IMR-90 (cell line): ENCODE measurements at regions of chr1 and their contacts with region 1.

Region 1: DNA sequence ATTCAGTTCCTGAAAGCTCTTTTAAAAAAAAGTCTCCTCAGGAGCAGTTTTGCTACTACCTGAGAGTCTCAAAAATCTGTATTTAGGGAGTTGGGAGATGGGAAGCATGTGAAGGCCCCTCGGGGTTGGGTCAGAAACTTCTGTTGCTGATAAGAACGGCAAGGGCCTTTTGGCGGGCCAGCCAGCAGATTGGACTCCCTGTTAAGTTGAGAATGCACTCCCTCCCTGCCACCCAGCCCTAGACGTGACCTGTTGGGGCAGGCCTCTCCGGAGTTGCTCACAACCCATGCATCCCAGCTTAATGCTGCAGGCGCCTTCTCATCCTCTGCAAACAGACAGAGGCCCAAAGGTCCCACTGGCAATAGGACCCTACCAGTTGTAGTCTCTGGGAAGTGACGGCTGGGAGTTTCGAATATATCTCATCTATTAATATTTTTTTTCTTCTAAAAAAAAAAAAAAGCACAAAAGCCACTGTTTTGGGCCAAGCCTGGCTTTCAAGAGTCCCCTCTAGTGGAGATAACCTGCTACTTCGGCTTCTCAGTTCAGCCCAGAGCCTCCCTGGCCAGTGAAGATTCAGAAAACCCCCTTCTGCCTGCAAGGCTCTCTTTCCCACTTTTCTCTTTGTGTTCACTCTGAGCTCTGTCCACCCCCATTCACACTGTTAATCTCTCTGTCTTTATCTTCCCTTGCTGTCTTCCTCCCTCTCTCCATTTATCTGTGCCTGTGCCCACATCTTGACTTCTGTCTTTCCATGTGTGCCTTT is 5.3 kb downstream of the PLXNA2 start:
- DNase-seq: peak; percentile 57
- ATAC-seq: peak; percentile 52
- H3K4me3 ChIP-seq: no peak overlapping the region
- H3K27ac ChIP-seq: no peak overlapping the region
- H3K4me1 ChIP-seq: peaks cover 18% of the 10 kb centered on the region
- H3K27me3 ChIP-seq: peaks cover 5% of the 10 kb centered on the region; the same call in 1 of the 2 replicates
- CTCF ChIP-seq: peak; percentile 78
- POLR2A ChIP-seq: no peak
- RAD21 ChIP-seq: peak; percentile 77

Region 2: GRCh38 chr1:208132287-208132883 is 106.5 kb before region 1 on chr1:
- CTCF ChIA-PET with region 1: interaction called, 4 read pairs
- POLR2A ChIA-PET with region 1: no interaction called
- dilution Hi-C with region 1: no loop called
- in situ Hi-C with region 1: loop called (anchors 5 kb)
- intact Hi-C with region 1: loop called (anchors 2 kb)
- DNase-seq: peak; percentile 42
- ATAC-seq: peak; percentile 68
- H3K4me3 ChIP-seq: no peak overlapping the region
- H3K27ac ChIP-seq: no peak overlapping the region
- H3K4me1 ChIP-seq: 0 out of 2 replicates have a peak, but pooled peaks cover 2% of the 10 kb centered on the region
- H3K27me3 ChIP-seq: no peaks in the 10 kb centered on the region
- CTCF ChIP-seq: peak; percentile 61
- POLR2A ChIP-seq: no peak
- RAD21 ChIP-seq: peak; percentile 59